WTC11 (cell line): ENCODE measurements at regions of chr11 and their contacts with region 1.

Region 1: GRCh38 chr11:109939166-109939810 is 153.9 kb upstream of the ZC3H12C start:
- DNase-seq: no peak
- ATAC-seq: peak; percentile 90
- H3K4me3 Mint-ChIP-seq: no peak overlapping the region
- H3K27ac Mint-ChIP-seq: no peak overlapping the region
- H3K4me1 Mint-ChIP-seq: no peaks in the 10 kb centered on the region
- H3K27me3 Mint-ChIP-seq: no peaks in the 10 kb centered on the region
- CTCF ChIP-seq: peak; percentile 23; the same call in 1 of the 2 replicates

Region 2: DNA sequence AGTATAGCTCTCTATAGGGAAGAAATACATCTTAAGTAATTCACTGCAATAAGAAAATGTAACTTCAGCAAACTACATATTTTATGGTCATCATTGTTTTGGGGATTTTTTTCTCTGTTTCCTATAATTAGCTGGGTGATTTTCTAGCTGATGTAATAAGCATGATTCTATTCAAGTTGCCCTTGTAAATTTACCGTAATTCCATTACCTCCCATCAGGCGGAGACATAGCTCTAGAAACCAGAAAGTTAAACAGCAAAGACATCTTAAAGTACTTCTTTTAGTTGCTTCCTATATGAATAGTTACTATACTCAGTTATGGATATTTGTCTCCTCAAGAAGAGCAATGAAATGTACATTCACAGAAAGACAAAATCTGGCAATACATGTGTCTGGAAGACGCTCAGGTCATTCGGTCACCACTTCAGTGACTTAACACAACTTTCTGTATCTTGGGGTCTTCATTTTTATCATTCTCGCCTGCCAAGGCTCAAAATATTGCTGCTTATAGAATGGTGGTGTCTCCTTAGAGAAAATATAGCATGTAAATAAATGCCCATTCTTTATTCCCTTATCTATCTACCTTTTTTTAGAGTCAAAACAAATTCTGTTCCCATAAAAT is 86.0 kb before region 1 on chr11:
- CTCF ChIA-PET with region 1: interaction called, 60 read pairs
- POLR2A ChIA-PET with region 1: no interaction called
- DNase-seq: no peak
- ATAC-seq: peak; percentile 52
- H3K4me3 Mint-ChIP-seq: no peak overlapping the region
- H3K27ac Mint-ChIP-seq: no peak overlapping the region
- H3K4me1 Mint-ChIP-seq: no peaks in the 10 kb centered on the region
- H3K27me3 Mint-ChIP-seq: no peaks in the 10 kb centered on the region; the same call in 1 of the 2 replicates
- CTCF ChIP-seq: peak; percentile 26; the same call in 1 of the 2 replicates

Region 3: GRCh38 chr11:109864834-109865547 is 74.3 kb before region 1 on chr11:
- CTCF ChIA-PET with region 1: interaction called, 10 read pairs
- POLR2A ChIA-PET with region 1: no interaction called
- DNase-seq: no peak
- ATAC-seq: no peak
- H3K4me3 Mint-ChIP-seq: no peak overlapping the region
- H3K27ac Mint-ChIP-seq: no peak overlapping the region
- H3K4me1 Mint-ChIP-seq: peaks cover 14% of the 10 kb centered on the region
- H3K27me3 Mint-ChIP-seq: no peaks in the 10 kb centered on the region
- CTCF ChIP-seq: no peak